GM18951 (cell line): ENCODE measurements at regions of chr9 and their contacts with region 1.

Region 1: DNA sequence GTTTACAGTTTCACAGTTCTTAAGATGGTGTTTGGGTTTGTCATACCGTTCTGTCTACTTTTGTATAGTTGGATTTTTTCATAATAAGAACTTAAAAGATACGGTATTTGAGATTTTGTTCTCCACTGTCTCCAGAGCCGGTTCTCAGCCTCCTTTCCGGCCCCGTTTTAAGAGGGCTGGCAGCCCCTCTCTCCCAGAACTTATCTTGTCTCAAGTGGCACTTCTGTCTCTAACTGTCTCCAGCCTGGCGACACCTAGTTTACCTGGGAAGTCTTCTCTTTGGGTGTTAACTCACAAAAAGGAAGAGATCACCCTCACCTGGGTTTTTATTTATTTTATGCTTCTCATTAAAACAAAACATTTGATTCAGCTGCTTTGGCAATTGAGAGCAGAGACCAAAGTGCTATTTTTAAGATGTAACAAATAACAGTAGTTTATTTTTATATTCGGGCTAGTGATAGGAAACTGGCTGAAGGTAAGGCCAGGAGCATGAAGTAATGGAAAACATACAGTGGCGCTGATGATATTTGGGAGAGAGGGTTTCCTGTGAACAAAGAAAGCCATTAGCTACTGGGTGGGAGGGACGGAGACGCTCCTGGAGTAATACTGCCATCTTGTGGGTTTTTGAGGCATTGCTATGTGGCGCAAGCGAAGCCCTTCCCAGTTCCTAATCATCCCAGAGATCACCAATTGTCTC is 48.3 kb downstream of the ACER2 start:
- POLR2A ChIP-seq: no peak

Region 2: DNA sequence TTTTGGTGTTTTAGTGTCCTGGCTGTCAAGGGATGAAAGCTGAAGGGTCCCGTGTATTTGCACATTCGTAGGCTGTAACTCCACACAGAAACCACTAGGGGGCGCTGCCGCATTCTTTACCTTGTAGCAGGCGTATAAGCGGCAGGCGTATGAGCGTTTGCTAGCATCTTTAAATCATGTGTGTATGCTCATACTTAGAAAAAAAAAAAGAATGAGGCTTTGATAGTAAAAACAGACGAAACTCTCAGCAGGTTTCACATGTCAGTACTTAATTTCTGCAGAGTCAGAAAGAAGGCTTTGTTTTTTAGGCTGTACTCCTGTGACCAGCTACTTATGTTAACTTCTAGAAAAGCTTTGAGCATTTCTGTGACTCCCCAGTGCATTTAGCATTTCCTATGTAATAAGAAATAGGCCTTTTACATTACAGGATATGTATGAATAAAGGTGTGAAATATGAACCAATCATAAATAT is 1202.0 kb before region 1 on chr9:
- in situ Hi-C with region 1: loop called (anchors 25 kb)
- POLR2A ChIP-seq: no peak

Region 3: DNA sequence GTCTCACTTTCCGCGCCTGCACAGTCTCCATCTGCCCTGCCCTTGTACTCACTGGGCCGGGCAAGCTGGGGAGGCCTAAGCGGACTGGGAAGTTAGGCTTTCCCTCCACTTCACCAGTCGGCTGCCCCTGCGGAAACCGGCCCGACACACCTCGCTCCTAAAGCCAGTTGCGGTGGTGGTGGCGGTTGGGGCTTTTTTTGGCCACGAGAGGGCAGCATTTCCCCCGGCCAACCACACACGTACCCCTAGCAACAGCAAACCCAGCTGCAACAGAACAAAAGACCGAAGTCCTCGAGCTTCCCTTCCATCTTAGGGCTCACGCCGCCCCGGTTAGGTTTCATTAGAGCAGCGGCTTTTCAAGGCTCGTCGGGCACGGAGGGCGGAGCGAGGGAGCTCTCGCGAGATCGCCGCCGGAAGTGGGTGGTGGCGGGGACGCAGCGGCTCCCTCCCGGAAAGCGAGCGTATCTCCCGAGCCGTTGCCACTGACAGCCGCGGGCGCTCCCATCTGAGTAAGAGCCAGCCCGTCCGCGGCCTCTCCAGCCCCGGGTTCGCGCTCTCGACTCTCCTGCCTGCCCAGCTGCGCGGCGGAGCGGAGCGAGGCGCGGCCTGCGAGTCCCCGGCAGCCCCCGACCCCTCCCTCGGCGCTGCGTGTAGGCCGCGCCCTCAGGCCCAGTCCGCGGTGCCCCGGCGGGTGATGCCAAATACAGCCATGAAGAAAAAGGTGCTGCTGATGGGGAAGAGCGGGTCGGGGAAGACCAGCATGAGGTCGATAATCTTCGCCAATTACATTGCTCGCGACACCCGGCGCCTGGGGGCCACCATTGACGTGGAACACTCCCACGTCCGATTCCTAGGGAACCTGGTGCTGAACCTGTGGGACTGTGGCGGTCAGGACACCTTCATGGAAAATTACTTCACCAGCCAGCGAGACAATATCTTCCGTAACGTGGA is 407.9 kb before region 1 on chr9 and contains the start of gene RRAGA:
- in situ Hi-C with region 1: loop called (anchors 25 kb)
- POLR2A ChIP-seq: peak; percentile 95

Region 4: GRCh38 chr9:19184144-19184917 is 272.8 kb before region 1 on chr9:
- in situ Hi-C with region 1: loop called (anchors 25 kb)
- POLR2A ChIP-seq: no peak

Region 5: DNA sequence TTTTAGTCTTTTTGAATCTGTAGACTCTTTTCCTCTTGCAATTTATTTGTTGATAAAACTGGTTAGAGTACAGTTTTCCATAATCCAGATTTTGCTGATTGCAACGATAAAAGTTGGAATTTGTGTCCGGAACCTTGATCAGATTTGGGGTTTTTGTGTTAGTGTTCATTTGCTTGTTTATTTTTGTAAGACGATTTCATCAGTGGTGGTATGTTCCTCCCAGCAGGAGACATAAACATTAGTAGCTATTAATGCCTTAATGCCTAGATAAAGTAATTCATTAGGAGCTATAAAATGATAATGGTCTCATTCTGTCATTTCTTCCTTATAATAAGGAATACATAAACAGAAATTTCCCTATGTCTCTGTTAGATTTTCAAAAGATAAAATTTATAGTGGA is 98.4 kb before region 1 on chr9:
- in situ Hi-C with region 1: no loop called
- POLR2A ChIP-seq: no peak

Region 6: DNA sequence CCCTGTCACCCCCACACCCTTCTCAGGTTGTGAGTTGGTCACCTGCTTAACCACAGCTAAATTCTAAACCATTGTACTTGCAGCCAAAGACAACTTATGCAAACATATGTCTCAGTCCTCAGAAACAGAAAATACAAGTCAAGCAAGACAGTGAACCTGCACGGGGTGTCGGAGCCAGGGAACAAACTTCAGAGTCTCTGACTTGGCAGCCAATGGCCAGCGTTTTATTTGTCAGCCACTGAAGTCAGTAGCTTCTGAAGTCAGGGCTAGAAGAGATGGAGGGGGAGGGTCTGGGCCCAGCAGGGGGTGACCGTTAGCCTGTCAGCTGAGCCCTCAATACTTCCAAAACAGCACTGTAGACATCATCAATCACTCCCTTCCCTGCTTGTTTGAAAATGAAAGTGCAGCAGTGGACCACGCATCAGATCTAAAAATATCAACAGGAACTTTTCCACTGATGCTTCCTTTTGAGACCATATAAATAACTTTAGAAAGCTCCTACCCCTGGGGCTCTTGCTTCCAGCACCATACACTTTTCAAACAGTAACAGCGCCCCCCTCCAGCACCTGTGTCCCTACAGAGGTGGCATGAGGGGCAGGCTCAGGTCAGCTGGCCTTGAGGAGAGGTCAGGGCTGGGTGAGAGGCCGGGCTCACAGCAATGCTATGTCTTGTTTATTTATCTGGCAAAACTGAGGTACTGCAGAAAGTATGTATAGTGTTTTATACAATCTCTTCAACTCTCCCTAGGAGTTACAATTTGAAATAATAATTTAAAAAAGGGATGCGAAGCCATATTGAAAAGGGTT is 94.2 kb after region 1 on chr9:
- in situ Hi-C with region 1: no loop called
- POLR2A ChIP-seq: no peak

Region 7: GRCh38 chr9:19629488-19629887 is 172.3 kb after region 1 on chr9:
- in situ Hi-C with region 1: no loop called
- POLR2A ChIP-seq: no peak

Region 8: DNA sequence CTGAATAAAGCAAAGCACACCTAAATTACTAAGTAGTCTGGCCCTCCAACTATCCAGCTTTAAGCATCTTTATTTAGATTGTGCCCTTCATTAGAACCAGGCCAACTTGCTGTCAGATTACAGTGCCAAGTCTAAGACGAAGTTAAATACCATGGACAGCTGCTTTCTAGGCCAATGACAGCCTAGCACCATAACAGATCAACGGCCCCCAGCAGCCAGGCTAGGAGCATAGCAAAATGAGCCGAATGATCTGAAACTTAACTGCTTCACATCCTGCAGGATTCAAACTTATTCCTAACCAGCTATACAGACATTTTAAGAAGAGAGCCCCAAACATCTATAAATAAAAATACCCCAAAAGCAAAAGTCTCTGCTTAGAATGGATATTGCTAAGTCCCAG is 324.9 kb after region 1 on chr9:
- in situ Hi-C with region 1: no loop called
- POLR2A ChIP-seq: no peak